ENCODE measurements at regions of chr6 and their contacts with region 1.

Region 1: GRCh38 chr6:56868687-56869086 is 86.2 kb upstream of the BEND6 start:
- DNase-seq: peak; percentile 85
- ATAC-seq: peak; percentile 46
- H3K4me3 ChIP-seq: no peak overlapping the region
- H3K27ac ChIP-seq: peak overlapping the region; percentile 66
- H3K4me1 ChIP-seq: peaks cover 59% of the 10 kb centered on the region
- H3K27me3 ChIP-seq: no peaks in the 10 kb centered on the region
- CTCF ChIP-seq: no peak

Region 2: DNA sequence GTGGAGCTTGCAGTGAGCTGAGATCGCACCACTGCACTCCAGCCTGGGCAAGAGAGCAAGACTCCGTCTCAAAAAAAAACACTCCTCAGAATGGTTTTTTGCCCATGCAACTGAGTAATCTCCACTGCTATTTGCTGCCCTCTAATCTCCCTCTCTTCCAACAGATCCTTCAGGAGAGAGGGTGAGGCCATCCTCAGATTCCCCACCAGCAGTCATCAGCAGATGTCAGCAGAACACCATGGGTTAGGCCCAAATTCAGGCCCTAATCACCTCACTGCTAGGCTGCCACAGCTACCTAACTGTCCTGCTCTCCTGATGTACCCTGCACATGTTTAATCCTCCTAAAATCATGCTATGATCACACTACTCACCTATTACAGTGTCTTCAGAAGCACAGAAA is 23.1 kb after region 1 on chr6:
- CTCF ChIA-PET with region 1: no interaction called
- POLR2A ChIA-PET with region 1: interaction called, 15 read pairs
- intact Hi-C with region 1: loop called (anchors 5 kb)
- DNase-seq: peak; percentile 30
- ATAC-seq: peak; percentile 49; the same call in 1 of the 2 replicates
- H3K4me3 ChIP-seq: no peak overlapping the region
- H3K27ac ChIP-seq: no peak overlapping the region
- H3K4me1 ChIP-seq: peaks cover 15% of the 10 kb centered on the region
- H3K27me3 ChIP-seq: no peaks in the 10 kb centered on the region
- CTCF ChIP-seq: 0 out of 2 replicates have a peak, but pooled peaks have one; percentile 21

Region 3: DNA sequence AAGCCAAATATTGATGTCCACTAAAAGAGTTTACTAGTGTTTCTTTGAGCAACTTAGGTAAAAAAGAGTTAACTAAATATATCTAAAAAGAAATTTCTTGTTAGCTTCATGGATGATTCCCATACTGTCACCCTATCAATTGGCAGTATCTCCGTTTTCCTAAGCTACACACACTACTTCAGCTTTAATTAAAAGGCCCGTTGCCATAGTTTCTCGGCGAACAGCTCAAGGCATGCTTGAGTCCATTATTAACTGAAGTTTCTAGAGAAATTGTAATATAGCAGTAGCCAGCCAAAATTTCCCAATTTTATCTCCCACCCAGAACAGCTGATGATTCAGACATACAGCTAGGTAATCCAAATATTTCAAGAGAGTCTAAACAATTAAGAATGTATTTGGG is 66.2 kb after region 1 on chr6:
- CTCF ChIA-PET with region 1: interaction called, 10 read pairs
- POLR2A ChIA-PET with region 1: no interaction called
- intact Hi-C with region 1: no loop called
- DNase-seq: no peak
- ATAC-seq: no peak
- H3K4me3 ChIP-seq: no peak overlapping the region
- H3K27ac ChIP-seq: no peak overlapping the region
- H3K4me1 ChIP-seq: peaks cover 19% of the 10 kb centered on the region
- H3K27me3 ChIP-seq: no peaks in the 10 kb centered on the region
- CTCF ChIP-seq: no peak

Region 4: DNA sequence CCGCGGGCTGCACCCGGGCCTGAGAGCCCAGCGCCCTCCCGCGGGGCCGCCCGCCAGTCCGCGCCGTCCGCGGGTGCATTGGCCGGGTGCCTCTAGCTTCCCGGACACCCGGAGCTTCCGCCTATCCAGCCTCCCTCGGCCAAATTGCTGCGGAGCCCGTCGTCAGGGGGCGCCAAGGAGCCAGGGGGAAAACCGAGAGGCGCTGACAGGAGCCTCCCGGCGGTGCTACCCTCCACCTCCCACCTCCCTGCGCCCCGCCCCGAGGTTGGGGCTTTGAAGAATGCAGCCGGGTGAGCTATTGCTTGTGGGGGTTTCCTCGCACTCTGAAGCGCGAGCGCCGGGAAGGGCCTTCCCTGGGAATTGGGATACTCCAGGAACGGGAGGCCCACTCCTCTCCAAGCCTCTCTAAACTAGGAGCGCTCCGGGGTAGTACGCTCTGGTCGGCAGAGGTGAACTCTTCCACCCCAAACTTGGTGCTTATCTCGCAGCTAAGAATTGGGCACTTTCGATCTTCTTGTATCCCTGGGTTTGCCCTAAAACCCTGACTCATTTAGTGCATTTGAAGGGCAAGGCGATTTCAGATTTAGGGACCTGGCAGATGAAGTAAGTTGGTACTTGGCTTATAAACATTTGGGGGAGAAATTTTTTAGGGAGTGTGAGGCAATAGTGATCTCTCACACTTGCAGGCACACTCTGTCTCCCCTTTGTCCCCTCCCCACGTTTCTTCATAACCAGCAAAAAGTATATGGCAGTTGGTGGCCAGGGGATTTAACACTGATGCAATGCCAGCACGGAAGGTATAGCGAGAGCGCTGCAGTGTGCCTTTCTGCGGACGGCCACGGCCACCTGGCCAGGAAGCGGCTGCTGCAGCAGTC is 86.7 kb after region 1 on chr6:
- CTCF ChIA-PET with region 1: no interaction called
- POLR2A ChIA-PET with region 1: no interaction called
- intact Hi-C with region 1: no loop called
- DNase-seq: peak; percentile 96
- ATAC-seq: peak; percentile 72
- H3K4me3 ChIP-seq: peak overlapping the region; percentile 77
- H3K27ac ChIP-seq: peak overlapping the region; percentile 31
- H3K4me1 ChIP-seq: peaks cover 58% of the 10 kb centered on the region
- H3K27me3 ChIP-seq: no peaks in the 10 kb centered on the region
- CTCF ChIP-seq: peak; percentile 83

Region 5: DNA sequence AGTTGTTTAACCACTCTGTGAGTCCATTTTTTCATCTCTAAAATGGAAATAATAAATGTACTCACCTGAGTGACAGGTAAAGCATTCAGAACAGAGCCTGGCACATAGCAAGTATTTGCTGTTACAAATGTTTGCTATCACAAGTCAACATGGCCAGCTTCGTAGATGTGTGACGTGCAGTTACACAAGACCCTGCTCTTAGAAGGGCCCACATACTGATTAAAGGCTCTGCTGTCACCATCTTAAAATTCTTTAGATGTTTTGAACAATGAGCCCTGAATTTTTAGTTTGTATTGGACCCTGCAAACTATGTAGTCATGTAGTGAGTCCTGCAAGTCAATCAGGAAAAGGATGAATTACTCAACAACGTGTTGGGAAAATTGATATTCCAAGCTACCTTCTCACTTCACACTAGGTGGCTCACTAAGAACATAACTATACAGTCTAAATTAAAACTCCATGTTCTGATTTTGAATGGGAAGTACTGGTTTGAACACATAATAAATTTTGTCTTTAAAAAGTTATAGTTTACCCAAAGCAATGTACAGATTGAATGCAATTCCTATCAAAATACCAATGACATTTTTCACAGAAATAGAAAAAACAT is 137.5 kb after region 1 on chr6:
- CTCF ChIA-PET with region 1: no interaction called
- POLR2A ChIA-PET with region 1: no interaction called
- intact Hi-C with region 1: no loop called
- DNase-seq: no peak
- ATAC-seq: no peak
- H3K4me3 ChIP-seq: no peak overlapping the region
- H3K27ac ChIP-seq: no peak overlapping the region
- H3K4me1 ChIP-seq: no peaks in the 10 kb centered on the region
- H3K27me3 ChIP-seq: no peaks in the 10 kb centered on the region
- CTCF ChIP-seq: no peak

Measured in PC-3 (cell line).